Heart left ventricle (tissue), 16 donors: ENCODE measurements at regions of chr1 and their contacts with region 1.

Region 1: DNA sequence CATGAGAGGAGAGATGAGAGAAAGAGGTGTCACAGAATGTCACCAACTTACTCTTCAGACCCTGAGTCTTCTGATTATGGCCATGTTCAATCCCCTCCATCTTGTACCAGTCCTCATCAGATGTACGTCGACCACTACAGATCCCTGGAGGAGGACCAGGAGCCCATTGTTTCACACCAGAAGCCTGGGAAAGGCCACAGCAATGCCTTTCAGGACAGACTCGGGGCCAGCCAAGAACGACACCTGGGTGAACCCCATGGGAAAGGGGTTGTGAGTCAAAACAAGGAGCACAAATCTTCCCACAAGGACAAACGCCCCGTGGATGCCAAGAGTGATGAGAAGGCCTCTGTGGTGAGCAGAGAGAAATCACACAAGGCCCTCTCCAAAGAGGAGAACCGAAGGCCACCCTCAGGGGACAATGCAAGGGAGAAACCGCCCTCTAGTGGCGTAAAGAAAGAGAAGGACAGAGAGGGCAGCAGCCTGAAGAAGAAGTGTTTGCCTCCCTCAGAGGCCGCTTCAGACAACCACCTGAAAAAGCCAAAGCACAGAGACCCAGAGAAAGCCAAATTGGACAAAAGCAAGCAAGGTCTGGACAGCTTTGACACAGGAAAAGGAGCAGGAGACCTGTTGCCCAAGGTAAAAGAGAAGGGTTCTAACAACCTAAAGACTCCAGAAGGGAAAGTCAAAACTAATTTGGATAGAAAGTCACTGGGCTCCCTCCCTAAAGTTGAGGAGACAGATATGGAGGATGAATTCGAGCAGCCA is 8.0 kb downstream of the ELOA start:
- DNase-seq: peak in 1 of 5 donors; percentile 29
- ATAC-seq: peak; percentile 7 to 72 (median 62)
- H3K4me3 ChIP-seq: no peak overlapping the region
- H3K27ac ChIP-seq: peak overlapping the region in 1 of 12 donors; percentile 4
- H3K4me1 ChIP-seq: peaks cover 0 to 48% (median 10%) of the 10 kb centered on the region in 12 donors
- H3K27me3 ChIP-seq: no peaks in the 10 kb centered on the region
- CTCF ChIP-seq: peak; percentile 39 to 70 (median 52)
- POLR2A ChIP-seq: no peak

Region 2: GRCh38 chr1:23559136-23559984 is 191.9 kb before region 1 on chr1 and contains the start of gene ID3:
- intact Hi-C with region 1: loop called in 1 of 10 experiments (anchors 10 kb)
- DNase-seq: peak; percentile 97 to 99 (median 98)
- ATAC-seq: peak; percentile 75 to 86 (median 79)
- H3K4me3 ChIP-seq: peak within 1 kb of the TSS; percentile 60 to 92 (median 79)
- H3K27ac ChIP-seq: peak within 1 kb of the TSS; percentile 83 to 97 (median 94)
- H3K4me1 ChIP-seq: peaks cover 4 to 83% (median 59%) of the 10 kb centered on the region in 12 donors
- H3K27me3 ChIP-seq: no peaks in the 10 kb centered on the region
- CTCF ChIP-seq: no peak
- POLR2A ChIP-seq: peak; percentile 88 to 99
- total RNA-seq, gene ID3: 57.5 to 185 (median 91.0) TPM

Region 3: GRCh38 chr1:23732363-23733224 is 18.6 kb before region 1 on chr1:
- intact Hi-C with region 1: no loop called
- DNase-seq: no peak
- ATAC-seq: no peak
- H3K4me3 ChIP-seq: no peak overlapping the region
- H3K27ac ChIP-seq: no peak overlapping the region
- H3K4me1 ChIP-seq: peaks cover 0 to 16% (median 0%) of the 10 kb centered on the region in 12 donors
- H3K27me3 ChIP-seq: no peaks in the 10 kb centered on the region
- CTCF ChIP-seq: no peak
- POLR2A ChIP-seq: no peak